ENCODE measurements at regions of chr9 and their contacts with region 1.

Region 1: GRCh38 chr9:136991993-136992818 is at the start of gene PAXX:
- DNase-seq: peak; percentile 88
- H3K4me3 Mint-ChIP-seq: peak within 1 kb of the TSS; percentile 82
- H3K27ac Mint-ChIP-seq: peak within 1 kb of the TSS; percentile 81
- H3K4me1 Mint-ChIP-seq: no peaks in the 10 kb centered on the region
- H3K27me3 Mint-ChIP-seq: no peaks in the 10 kb centered on the region
- CTCF ChIP-seq: no peak
- total RNA-seq, gene PAXX: 43.6 and 57.9 TPM in 2 replicates

Region 2: DNA sequence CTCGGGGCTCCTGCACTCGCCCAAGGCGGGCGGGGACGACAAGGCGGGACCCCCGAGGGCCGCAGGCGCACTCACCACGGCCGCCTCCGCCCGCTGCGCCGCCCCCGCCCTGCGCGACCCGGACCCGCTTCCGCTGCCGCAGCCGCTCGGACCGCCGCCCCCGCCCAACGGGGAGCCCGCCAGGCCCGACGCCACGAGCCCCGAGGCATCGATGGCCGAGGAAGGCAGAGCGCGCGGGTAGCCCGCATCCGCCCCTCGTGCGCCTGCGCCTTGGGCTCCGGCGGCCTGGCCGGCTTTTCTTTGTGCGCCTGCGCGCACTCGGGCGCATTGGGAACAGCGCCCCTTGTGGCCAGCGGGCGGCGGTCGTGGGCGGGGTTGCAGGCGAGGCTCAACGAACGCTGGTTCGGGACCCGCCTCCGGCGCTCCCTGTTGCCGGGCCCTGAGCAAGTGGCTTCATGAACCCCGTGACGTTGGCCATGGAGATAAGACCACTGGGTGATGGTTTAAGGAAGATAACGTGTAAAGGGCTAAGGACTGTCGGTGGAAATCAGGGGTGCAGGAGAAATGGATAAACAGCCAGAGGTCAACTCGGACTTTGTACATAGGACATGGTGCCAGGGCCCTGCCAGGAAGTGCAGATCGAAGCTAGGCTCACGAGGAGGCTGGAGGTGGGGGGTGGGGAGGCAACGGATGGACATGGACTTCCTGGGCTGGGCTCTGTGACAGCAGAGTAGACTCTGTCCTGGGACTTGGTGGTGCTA is 47.5 kb before region 1 on chr9 and contains the starts of genes C8G and FBXW5:
- CTCF ChIA-PET with region 1: interaction called, 4 read pairs
- POLR2A ChIA-PET with region 1: interaction called, 9 read pairs
- intact Hi-C with region 1: loop called (anchors 1 kb)
- DNase-seq: peak; percentile 93
- H3K4me3 Mint-ChIP-seq: peak within 1 kb of the TSS; percentile 70
- H3K27ac Mint-ChIP-seq: peak within 1 kb of the TSS; percentile 69
- H3K4me1 Mint-ChIP-seq: no peaks in the 10 kb centered on the region
- H3K27me3 Mint-ChIP-seq: no peaks in the 10 kb centered on the region
- CTCF ChIP-seq: peak; percentile 91
- total RNA-seq, gene C8G: 1.0 and 1.1 TPM in 2 replicates
- total RNA-seq, gene FBXW5: 88.8 and 100 TPM in 2 replicates

Measured in MCF 10A (cell line).